Transverse colon (tissue), 4 donors: ENCODE measurements at regions of chr22 and their contacts with region 1.

Region 1: DNA sequence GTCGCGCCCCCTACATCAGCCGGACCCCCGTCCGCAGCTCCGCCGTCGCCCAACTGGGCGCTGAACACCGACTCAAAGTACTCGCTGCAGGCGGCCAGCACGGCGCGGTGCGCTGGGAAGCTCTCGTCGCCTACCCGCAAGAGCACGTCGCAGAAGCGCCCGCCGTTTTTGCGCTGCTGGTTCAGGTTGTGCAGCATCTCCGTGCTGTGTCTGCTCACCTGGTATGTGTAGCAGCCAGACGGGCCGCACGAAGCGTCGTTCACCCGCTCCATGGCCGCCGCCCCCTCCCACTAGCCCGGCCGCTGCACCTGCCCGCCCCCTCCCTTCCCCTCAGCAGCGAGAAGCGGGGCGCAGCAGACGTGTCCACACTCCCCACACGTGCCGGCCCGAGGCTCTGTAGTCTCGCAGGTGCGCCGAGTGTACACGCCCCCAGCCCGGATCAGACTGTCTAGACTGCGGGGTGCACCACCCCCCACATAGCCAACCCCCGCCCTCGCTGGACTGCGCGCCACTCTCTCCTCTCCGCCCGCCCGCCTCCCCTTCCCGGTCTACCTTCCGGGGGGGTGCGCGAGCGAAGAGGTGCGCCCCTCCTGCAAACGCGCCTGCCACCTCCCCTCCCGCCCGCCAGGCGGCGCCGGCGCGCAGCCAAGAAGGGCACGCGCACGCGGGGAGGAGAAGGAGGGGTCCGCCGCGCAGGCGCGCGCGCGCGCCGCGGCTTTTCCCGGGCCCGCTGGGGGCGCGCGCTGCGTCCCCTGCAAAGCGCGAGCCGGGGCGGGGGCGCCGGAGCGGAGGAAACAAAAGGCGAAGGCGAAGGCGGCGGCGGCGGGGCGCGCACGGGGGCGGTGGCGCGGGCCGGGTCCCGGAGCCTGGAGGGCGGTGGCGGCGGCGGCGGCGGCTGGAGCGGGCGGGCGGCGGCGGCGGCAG is 553 bp downstream of the PATZ1 start:
- DNase-seq: peak; percentile 88
- H3K4me3 ChIP-seq: peak overlapping the region; percentile 44 to 91 (median 65)
- H3K27ac ChIP-seq: peak overlapping the region; percentile 87 to 95 (median 91)
- H3K4me1 ChIP-seq: peaks cover 30 to 53% (median 42%) of the 10 kb centered on the region in 4 donors
- H3K27me3 ChIP-seq: no peaks in the 10 kb centered on the region
- CTCF ChIP-seq: peak; percentile 81 to 97 (median 87)
- EP300 ChIP-seq: no peak
- POLR2A ChIP-seq: no peak

Region 2: DNA sequence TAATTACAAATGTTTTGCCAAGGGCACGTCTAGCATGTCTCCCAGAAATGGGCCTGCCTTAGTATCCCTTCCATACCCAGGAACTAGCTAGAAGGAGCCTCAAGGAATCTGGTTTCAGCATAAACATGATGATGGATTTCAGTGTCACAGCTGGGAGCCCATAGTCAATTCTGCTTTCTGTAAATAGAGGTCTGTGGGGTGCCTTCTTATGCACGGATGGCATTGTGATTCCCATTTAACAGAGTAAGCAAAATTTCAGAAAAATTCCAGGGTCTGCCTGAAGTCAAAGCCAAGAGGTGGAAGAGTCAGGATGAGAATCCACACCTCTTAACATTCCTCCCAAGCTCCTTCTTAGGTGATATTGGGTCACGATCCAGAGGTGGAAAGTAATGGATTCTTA is 690.1 kb before region 1 on chr22:
- in situ Hi-C with region 1: no loop called
- intact Hi-C with region 1: loop called (anchors 5 kb)
- DNase-seq: no peak
- H3K4me3 ChIP-seq: no peak overlapping the region
- H3K27ac ChIP-seq: no peak overlapping the region
- H3K4me1 ChIP-seq: no peaks in the 10 kb centered on the region
- H3K27me3 ChIP-seq: no peaks in the 10 kb centered on the region
- CTCF ChIP-seq: no peak
- EP300 ChIP-seq: no peak
- POLR2A ChIP-seq: no peak

Region 3: DNA sequence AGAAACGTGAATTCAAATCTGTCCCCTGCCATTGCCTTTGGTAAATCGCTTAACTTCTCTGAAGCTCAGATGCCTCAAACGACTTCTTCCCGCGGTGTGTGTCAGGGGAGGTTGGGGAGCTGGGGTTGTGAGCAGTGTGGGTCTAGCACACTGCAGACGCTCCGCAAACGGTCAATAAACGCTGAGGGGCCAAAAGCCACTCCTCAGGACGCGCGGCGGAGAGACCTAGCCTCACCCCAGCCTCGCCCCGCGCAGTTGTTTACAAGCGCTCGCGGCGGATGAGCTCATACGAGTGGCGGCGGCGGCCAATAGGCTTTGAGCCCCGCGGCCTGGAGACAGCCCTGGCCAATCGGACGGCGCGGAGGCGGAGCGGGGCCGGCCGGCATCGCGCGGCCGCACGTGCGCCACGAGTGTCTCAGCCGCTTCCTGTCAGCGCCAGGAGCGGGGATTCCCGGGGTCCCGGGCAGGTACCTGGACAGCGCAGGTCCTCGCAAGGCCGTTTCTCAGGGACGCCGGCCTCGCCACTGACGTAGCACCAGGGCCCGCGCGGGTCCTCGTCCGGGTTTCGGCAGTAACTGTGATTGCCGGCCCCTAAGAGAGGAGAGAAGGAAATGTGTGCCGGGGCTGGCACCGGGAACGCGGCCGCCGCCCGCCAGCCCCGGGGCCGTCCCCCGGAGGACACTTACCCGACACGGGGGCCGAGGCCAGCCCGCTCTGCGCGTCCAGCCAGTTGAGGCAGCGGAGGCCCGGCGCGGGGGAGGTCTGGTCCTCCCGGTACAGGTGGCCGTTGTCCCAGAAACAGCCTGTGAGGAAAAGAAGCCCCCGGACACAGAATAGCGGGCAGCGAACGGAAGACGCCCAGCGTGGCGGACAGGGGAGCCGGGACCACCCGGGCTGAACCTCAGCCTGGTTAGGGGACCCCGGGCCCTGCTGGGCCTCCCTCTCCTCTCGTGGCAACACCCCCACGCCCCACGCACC is 54.8 kb before region 1 on chr22:
- in situ Hi-C with region 1: no loop called
- intact Hi-C with region 1: loop called (anchors 2 kb)
- DNase-seq: peak; percentile 98
- H3K4me3 ChIP-seq: peak overlapping the region; percentile 62 to 82 (median 72)
- H3K27ac ChIP-seq: peak overlapping the region; percentile 95 to 99 (median 98)
- H3K4me1 ChIP-seq: peaks cover 21 to 76% (median 36%) of the 10 kb centered on the region in 4 donors
- H3K27me3 ChIP-seq: no peaks in the 10 kb centered on the region
- CTCF ChIP-seq: no peak
- EP300 ChIP-seq: no peak
- POLR2A ChIP-seq: peak; percentile 98

Region 4: DNA sequence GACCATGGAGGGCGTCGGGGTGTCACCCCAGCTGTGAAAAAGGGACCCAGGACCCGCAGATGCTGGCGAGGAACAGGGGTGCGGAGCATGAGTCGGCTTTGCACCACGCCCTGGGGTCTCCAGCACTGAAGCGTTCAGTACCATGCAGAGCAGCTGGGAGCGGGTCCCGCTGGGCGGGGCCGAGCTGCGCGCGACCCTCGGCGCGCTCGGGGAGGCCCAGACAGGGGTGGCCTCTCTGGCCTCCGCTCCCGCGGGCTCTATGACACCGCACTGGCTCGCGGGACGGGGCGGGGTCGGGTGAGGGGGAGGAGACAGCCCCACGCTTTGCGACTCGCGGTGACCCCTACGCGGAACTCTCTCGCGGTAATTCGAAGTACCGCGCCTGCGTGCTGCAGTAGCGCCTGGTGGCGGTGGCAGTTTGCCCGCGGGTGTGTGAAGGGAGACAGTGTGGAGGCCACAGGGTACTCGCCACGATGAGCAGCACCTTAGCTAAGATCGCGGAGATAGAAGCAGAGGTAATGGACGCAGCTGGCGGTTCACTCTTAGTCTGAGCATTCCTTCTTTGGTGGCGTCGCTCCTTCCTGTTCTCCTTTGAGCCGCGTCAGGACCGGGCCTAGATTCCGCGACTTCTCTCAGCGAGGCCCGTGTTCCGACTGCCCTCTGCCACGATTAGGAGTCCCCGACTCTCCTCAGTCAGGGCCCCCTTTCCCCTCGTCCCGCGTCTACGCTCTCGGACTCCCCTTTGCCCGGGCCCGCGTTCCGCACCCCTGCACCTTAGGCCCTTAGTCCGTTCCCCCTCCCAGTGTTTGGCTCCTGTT is 53.8 kb after region 1 on chr22 and contains the start of gene DRG1:
- in situ Hi-C with region 1: no loop called
- intact Hi-C with region 1: loop called (anchors 2 kb)
- DNase-seq: peak; percentile 98
- H3K4me3 ChIP-seq: peak within 1 kb of the TSS; percentile 67 to 89 (median 82)
- H3K27ac ChIP-seq: peak within 1 kb of the TSS; percentile 89 to 92 (median 90)
- H3K4me1 ChIP-seq: peaks cover 10 to 25% (median 15%) of the 10 kb centered on the region in 4 donors
- H3K27me3 ChIP-seq: no peaks in the 10 kb centered on the region
- CTCF ChIP-seq: peak in 4 of 5 experiments; percentile 5 to 63 (median 26)
- EP300 ChIP-seq: no peak
- POLR2A ChIP-seq: peak; percentile 95
- total RNA-seq, gene DRG1: 4.6 to 39.2 (median 26.3) TPM

Region 5: DNA sequence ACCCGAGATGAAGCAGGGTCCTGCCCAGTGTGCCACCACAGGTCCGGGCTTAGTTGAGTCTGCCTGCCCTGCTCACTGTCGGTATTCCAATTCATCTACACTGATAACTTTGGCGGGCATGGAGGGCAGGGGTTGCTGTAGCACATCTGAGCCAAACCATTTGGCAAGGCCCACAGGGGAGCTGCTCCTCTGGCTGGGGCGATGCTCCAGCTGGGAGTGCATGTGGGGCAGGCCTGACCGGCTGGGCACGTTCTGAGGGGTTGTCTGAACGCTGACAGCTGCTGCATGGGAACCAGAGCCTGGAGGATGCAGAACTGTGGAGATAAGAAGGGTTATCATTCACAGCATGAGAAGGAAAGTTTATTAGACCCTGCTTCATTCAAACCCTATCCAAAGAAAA is 94.2 kb after region 1 on chr22:
- in situ Hi-C with region 1: loop called in 1 of 4 experiments (anchors 25 kb)
- intact Hi-C with region 1: no loop called
- DNase-seq: no peak
- H3K4me3 ChIP-seq: no peak overlapping the region
- H3K27ac ChIP-seq: no peak overlapping the region
- H3K4me1 ChIP-seq: no peaks in the 10 kb centered on the region
- H3K27me3 ChIP-seq: no peaks in the 10 kb centered on the region
- CTCF ChIP-seq: no peak
- EP300 ChIP-seq: no peak
- POLR2A ChIP-seq: no peak